IMR-90 (cell line): ENCODE measurements at regions of chr6 and their contacts with region 1.

Region 1: GRCh38 chr6:39961178-39961577 is 26.9 kb upstream of the MOCS1 start:
- DNase-seq: peak; percentile 47
- ATAC-seq: peak; percentile 44
- H3K4me3 ChIP-seq: no peak overlapping the region
- H3K27ac ChIP-seq: peak overlapping the region; percentile 7
- H3K4me1 ChIP-seq: peaks cover 7% of the 10 kb centered on the region
- H3K27me3 ChIP-seq: peaks cover 2% of the 10 kb centered on the region; the same call in 1 of the 2 replicates
- CTCF ChIP-seq: no peak
- POLR2A ChIP-seq: no peak
- RAD21 ChIP-seq: no peak

Region 2: DNA sequence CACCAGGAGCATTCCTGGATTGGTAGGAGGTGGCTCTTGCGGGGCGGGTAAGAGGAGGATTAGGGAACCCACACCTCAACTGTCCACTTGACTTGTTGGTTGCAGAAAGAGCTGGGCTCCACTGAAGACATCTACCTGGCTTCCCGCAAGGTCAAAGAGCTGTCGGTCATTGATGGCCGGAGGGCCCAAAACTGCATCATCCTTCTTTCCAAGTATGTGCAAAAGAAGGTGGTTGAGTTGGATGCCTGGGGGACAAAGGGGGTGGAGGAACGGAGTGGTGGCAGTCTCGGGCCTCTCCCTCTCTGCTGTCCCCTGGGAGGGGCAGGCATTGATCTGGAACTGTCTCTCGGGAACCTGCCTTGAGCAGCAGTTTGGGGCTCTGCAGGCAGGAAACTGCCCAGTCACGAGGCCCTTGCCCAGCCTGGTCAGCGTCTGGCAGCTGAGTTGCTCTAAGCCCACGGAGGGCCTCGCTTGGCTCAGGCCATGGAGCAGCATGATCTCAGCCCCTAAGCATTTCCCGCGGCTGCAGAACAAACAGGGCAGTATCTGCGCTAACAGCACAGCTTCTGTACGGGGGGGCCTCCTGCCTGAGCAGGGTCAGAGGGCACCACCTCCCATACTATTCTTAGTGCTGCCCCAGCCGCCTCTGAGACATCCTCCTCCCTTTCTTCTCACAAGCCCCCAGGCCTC is 73.7 kb before region 1 on chr6:
- CTCF ChIA-PET with region 1: no interaction called
- POLR2A ChIA-PET with region 1: no interaction called
- dilution Hi-C with region 1: no loop called
- in situ Hi-C with region 1: no loop called
- intact Hi-C with region 1: loop called (anchors 5 kb)
- DNase-seq: peak; percentile 95
- ATAC-seq: peak; percentile 87
- H3K4me3 ChIP-seq: no peak overlapping the region
- H3K27ac ChIP-seq: peak overlapping the region; percentile 96
- H3K4me1 ChIP-seq: peaks cover 49% of the 10 kb centered on the region
- H3K27me3 ChIP-seq: no peaks in the 10 kb centered on the region
- CTCF ChIP-seq: no peak
- POLR2A ChIP-seq: no peak; the same call in 1 of the 2 replicates
- RAD21 ChIP-seq: no peak

Region 3: GRCh38 chr6:39934131-39934757 is 26.9 kb before region 1 on chr6 and contains the start of gene MOCS1:
- CTCF ChIA-PET with region 1: no interaction called
- POLR2A ChIA-PET with region 1: no interaction called
- dilution Hi-C with region 1: no loop called
- in situ Hi-C with region 1: no loop called
- intact Hi-C with region 1: loop called (anchors 1 kb)
- DNase-seq: peak; percentile 47
- ATAC-seq: peak; percentile 98
- H3K4me3 ChIP-seq: peak within 1 kb of the TSS; percentile 74
- H3K27ac ChIP-seq: peak within 1 kb of the TSS; percentile 27
- H3K4me1 ChIP-seq: peaks cover 23% of the 10 kb centered on the region
- H3K27me3 ChIP-seq: peaks cover 2% of the 10 kb centered on the region; the same call in 1 of the 2 replicates
- CTCF ChIP-seq: no peak
- POLR2A ChIP-seq: no peak
- RAD21 ChIP-seq: no peak
- total RNA-seq, gene MOCS1: 8.1 and 9.5 TPM in 2 replicates

Region 4: GRCh38 chr6:40049128-40049527 is 88.0 kb after region 1 on chr6:
- CTCF ChIA-PET with region 1: no interaction called
- POLR2A ChIA-PET with region 1: no interaction called
- dilution Hi-C with region 1: no loop called
- in situ Hi-C with region 1: no loop called
- intact Hi-C with region 1: no loop called
- DNase-seq: no peak
- ATAC-seq: no peak
- H3K4me3 ChIP-seq: no peak overlapping the region
- H3K27ac ChIP-seq: no peak overlapping the region
- H3K4me1 ChIP-seq: no peaks in the 10 kb centered on the region
- H3K27me3 ChIP-seq: no peaks in the 10 kb centered on the region
- CTCF ChIP-seq: no peak
- POLR2A ChIP-seq: no peak
- RAD21 ChIP-seq: no peak